Ascending aorta (tissue), 2 donors: ENCODE measurements at regions of chr17 and their contacts with region 1.

Region 1: GRCh38 chr17:36601303-36602029 is at the start of gene MRM1:
- DNase-seq: peak; percentile 71 to 96
- H3K4me3 ChIP-seq: peak within 1 kb of the TSS; percentile 73 to 95
- H3K27ac ChIP-seq: peak within 1 kb of the TSS; percentile 87
- H3K4me1 ChIP-seq: peaks cover 3 to 20% of the 10 kb centered on the region in 2 donors
- H3K27me3 ChIP-seq: no peaks in the 10 kb centered on the region
- CTCF ChIP-seq: peak in 1 of 3 experiments; percentile 2
- total RNA-seq, gene MRM1: not detected

Region 2: DNA sequence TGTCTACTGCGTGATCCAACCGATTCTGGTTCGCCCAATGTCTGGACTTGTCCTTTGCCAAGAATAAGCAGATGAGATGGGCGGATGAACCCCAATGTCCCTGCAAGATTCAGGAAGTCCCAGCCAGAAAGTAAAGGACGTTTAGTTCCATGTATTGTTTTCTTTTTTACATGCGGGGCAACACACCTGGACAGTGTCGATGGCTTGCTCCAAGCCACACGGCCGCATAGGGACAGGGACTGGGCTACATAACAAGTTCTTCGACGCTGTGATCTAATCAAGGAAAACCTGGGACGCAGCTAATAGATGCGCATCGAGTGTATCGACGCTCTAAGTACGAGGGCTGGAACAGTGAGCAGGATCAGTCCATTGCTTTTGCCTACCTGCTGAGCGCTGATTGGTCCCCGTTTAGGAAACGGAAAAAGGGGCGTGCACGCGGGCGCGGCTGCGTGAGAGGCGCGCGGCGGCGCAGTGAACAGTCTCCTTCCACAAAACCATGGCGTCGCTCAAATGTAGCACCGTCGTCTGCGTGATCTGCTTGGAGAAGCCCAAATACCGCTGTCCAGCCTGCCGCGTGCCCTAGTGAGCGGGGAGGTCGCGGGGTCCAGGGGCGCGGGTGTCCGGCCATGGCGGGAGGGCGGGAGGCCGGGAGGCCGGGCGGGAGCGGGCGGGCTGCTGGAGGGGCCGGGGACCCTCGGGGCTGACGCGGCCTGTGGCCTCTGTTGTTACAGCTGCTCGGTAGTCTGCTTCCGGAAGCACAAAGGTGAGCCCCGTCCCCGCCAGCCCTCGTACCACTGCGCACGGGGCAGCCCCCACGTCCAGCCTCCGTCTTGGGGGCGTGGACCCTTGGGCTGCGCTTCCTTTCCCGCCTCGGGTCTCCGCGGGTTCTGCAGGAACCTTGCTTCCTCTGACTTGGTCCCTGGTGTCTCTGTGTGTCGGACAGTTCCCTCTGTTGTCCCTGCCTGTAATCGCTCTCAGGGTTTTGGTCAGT is 115.0 kb before region 1 on chr17 and contains the start of gene ZNHIT3:
- intact Hi-C with region 1: loop called (anchors 1 kb)
- DNase-seq: peak; percentile 77 to 96
- H3K4me3 ChIP-seq: peak within 1 kb of the TSS; percentile 80 to 99
- H3K27ac ChIP-seq: peak within 1 kb of the TSS; percentile 71 to 91
- H3K4me1 ChIP-seq: peaks cover 5 to 24% of the 10 kb centered on the region in 2 donors
- H3K27me3 ChIP-seq: no peaks in the 10 kb centered on the region
- CTCF ChIP-seq: no peak
- total RNA-seq, gene ZNHIT3: 49.4 TPM

Region 3: GRCh38 chr17:36545465-36546417 is 55.7 kb before region 1 on chr17:
- intact Hi-C with region 1: loop called (anchors 1 kb)
- DNase-seq: peak; percentile 94 to 98
- H3K4me3 ChIP-seq: peak overlapping the region; percentile 95 to 98
- H3K27ac ChIP-seq: peak overlapping the region; percentile 99 to 100
- H3K4me1 ChIP-seq: peaks cover 16 to 35% of the 10 kb centered on the region in 2 donors
- H3K27me3 ChIP-seq: no peaks in the 10 kb centered on the region
- CTCF ChIP-seq: no peak

Region 4: GRCh38 chr17:37047631-37048104 is 446.2 kb after region 1 on chr17:
- intact Hi-C with region 1: loop called (anchors 2 kb)
- DNase-seq: peak; percentile 26 to 75
- H3K4me3 ChIP-seq: no peak overlapping the region
- H3K27ac ChIP-seq: no peak overlapping the region
- H3K4me1 ChIP-seq: no peaks in the 10 kb centered on the region
- H3K27me3 ChIP-seq: no peaks in the 10 kb centered on the region
- CTCF ChIP-seq: peak; percentile 65 to 90 (median 81)

Region 5: GRCh38 chr17:37406635-37407461 is 805.4 kb after region 1 on chr17 and contains the starts of genes ACACA and TADA2A:
- intact Hi-C with region 1: loop called (anchors 5 kb)
- DNase-seq: peak; percentile 22 to 88
- H3K4me3 ChIP-seq: peak within 1 kb of the TSS; percentile 72 to 95
- H3K27ac ChIP-seq: peak within 1 kb of the TSS; percentile 90 to 94
- H3K4me1 ChIP-seq: peaks cover 0 to 16% of the 10 kb centered on the region in 2 donors
- H3K27me3 ChIP-seq: no peaks in the 10 kb centered on the region
- CTCF ChIP-seq: peak in 1 of 3 experiments; percentile 22
- total RNA-seq, gene ACACA: 69.0 TPM
- total RNA-seq, gene TADA2A: 7.7 TPM

Region 6: DNA sequence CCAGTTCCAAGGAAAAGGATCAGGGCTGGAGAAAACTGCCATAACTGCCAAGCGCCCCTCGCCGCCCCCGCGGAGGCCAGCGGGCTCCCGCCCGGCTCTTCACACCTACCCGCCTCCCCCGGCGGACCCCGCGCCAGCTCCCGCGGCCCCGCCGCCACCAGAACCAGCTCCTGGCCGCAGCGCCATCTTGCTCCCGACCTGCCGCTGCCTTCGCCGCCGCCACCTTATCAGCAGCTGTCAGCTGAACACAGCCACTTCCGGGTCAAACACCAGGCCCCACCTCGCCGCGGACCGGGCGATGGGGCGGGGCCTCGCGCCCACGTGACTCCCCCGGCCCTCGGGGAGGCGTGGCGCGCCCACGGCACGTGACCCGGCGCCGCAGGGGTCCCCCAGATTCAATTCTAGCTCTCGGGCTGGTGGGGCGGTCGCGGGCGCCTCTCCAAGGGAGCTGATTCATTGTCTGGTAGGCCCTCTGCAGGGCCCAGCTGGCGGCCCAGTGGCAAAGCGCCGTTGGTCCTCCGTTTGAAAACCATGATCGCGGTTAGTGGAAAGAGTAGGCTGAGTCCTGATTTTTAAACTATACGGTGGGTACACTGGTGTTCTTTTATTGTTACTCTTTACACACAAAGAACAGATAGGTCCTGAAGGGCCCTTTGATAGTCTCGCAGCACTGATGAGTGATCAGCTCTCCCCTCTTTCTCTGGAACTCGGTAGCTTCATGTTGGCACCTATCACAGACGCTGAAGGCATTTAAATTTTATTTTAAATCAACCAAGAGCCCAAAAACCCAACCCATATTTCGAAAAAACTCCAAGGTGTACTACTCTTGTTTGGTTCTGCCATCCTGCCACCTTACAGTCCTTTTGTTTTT is 1007.9 kb after region 1 on chr17 and contains the start of gene SYNRG:
- intact Hi-C with region 1: loop called (anchors 5 kb)
- DNase-seq: peak; percentile 89 to 99
- H3K4me3 ChIP-seq: peak within 1 kb of the TSS; percentile 69 to 96
- H3K27ac ChIP-seq: peak within 1 kb of the TSS; percentile 82 to 89
- H3K4me1 ChIP-seq: peaks cover 0 to 9% of the 10 kb centered on the region in 2 donors
- H3K27me3 ChIP-seq: no peaks in the 10 kb centered on the region
- CTCF ChIP-seq: peak; percentile 32 to 36 (median 35)
- total RNA-seq, gene SYNRG: 47.1 TPM